SK-N-SH (cell line): ENCODE measurements at regions of chr7 and their contacts with region 1.

Region 1: GRCh38 chr7:74514131-74514591 is 60.5 kb downstream of the GTF2IRD1 start:
- DNase-seq: peak; percentile 68
- H3K4me3 ChIP-seq: no peak overlapping the region
- H3K27ac ChIP-seq: peak overlapping the region in 1 of 2 experiments; percentile 65; a peak in 1 of 4 replicates
- H3K4me1 ChIP-seq: peaks cover 0 to 18% of the 10 kb centered on the region in 2 experiments; a peak in 1 of 4 replicates
- H3K27me3 ChIP-seq: no peaks in the 10 kb centered on the region
- CTCF ChIP-seq: no peak
- EP300 ChIP-seq: peak in 1 of 2 experiments; percentile 88; a peak in 2 of 4 replicates
- RAD21 ChIP-seq: no peak

Region 2: GRCh38 chr7:74502181-74502891 is 11.8 kb before region 1 on chr7:
- CTCF ChIA-PET with region 1: interaction called, 19 read pairs
- POLR2A ChIA-PET with region 1: interaction called, 8 read pairs
- DNase-seq: no peak
- H3K4me3 ChIP-seq: no peak overlapping the region
- H3K27ac ChIP-seq: peak overlapping the region in 1 of 2 experiments; percentile 31; a peak in 1 of 4 replicates
- H3K4me1 ChIP-seq: peaks cover 0 to 33% of the 10 kb centered on the region in 2 experiments; a peak in 1 of 4 replicates
- H3K27me3 ChIP-seq: no peaks in the 10 kb centered on the region
- CTCF ChIP-seq: no peak
- EP300 ChIP-seq: no peak
- RAD21 ChIP-seq: no peak